ENCODE measurements at regions of chr16 and their contacts with region 1.

Region 1: DNA sequence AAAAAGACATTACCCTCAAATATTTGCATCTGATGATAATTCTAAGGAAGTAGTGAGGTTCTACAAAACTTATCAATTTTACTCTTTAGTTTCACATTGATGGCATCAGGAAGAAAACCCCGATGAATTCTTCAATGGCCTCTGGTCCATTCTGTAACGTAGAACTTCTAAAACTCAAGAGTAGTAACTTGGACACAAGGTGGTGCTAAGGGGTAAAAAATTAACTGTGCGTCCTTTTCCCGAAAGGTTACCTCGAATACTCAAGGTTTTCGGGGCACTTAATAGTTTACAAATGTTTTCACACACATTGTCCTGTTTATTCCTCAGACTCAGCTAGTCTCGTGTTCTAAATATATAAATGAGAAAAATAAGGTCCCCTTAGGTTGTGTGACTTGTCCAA is 517.3 kb upstream of the ZFHX3 start:
- DNase-seq: no peak
- ATAC-seq: no peak
- H3K4me3 ChIP-seq: no peak overlapping the region
- H3K27ac ChIP-seq: no peak overlapping the region
- H3K4me1 ChIP-seq: no peaks in the 10 kb centered on the region
- H3K27me3 ChIP-seq: no peaks in the 10 kb centered on the region

Region 2: DNA sequence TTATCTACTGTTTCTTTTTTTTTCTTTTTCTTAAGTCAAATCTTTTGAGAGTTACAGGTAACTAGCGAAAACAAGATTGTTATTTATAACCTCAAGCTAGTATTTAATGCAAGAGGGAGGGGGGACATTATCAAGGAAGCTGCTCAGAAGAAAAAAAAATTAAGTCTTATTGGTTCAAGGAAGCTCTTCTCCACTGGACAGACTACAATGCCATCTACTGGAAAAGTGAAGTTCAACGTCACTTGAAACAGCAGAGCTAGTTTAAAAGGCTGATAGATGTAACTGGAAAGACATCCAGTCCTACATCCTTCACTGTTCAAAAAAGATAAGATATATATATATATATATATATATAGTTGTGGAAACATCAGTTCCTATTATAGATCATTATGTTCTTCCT is 313.3 kb after region 1 on chr16:
- intact Hi-C with region 1: loop called (anchors 1 to 2 kb)
- DNase-seq: no peak
- ATAC-seq: no peak
- H3K4me3 ChIP-seq: no peak overlapping the region
- H3K27ac ChIP-seq: no peak overlapping the region
- H3K4me1 ChIP-seq: no peaks in the 10 kb centered on the region
- H3K27me3 ChIP-seq: no peaks in the 10 kb centered on the region

Region 3: GRCh38 chr16:73956587-73957494 is 391.6 kb after region 1 on chr16:
- intact Hi-C with region 1: loop called in 1 of 2 experiments (anchors 10 kb)
- DNase-seq: peak in 1 of 2 donors; percentile 61
- ATAC-seq: peak; percentile 71
- H3K4me3 ChIP-seq: no peak overlapping the region
- H3K27ac ChIP-seq: no peak overlapping the region
- H3K4me1 ChIP-seq: no peaks in the 10 kb centered on the region
- H3K27me3 ChIP-seq: no peaks in the 10 kb centered on the region